Adrenal gland (tissue), 19 donors: ENCODE measurements at regions of chr1 and their contacts with region 1.

Region 1: GRCh38 chr1:39901698-39902459 is at the start of gene MYCL:
- DNase-seq: peak; percentile 32 to 71 (median 58)
- H3K4me3 ChIP-seq: peak within 1 kb of the TSS in 2 of 4 donors; percentile 24 to 57
- H3K27ac ChIP-seq: no peak within 1 kb of the TSS
- H3K4me1 ChIP-seq: peaks cover 11 to 19% of the 10 kb centered on the region in 2 donors
- H3K27me3 ChIP-seq: peaks cover 22% of the 10 kb centered on the region
- CTCF ChIP-seq: peak; percentile 38 to 64 (median 60)
- POLR2A ChIP-seq: no peak
- total RNA-seq, gene MYCL: 0.24 to 0.69 (median 0.37) TPM in 8 of 9 donors, not detected in the other

Region 2: DNA sequence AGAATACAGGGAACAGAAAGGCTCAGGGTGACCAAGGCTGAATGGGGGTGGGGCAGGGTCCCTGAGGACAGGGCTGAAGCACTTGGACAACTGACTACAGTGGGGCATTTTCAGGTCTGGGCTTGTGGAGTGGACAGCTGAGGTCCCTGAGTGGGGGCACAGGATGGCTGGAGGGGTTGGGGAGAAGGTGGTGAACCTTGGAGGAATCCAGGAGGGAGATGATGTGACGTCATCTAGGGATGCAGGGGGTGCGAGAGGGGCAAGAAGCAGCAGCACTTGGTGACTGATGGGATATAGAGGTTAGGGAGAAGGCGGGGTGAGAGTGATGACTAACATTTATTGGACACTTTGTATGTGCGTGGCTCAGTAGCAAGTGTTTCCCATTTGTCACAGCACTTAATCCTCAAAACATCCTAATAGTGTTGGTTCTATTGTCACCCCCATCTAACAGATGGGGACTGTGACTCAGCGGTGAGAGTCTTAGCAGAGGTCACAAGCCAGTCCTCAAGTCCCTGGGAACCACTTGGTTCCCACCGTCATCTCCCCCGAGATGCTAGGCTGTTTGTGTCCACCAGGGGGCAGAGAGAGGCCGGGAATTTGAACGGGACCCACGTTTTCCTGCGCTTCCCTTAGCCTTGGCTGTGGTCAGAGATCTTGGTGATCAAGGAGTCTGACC is 85.3 kb before region 1 on chr1:
- intact Hi-C with region 1: loop called (anchors 5 kb)
- DNase-seq: peak; percentile 35 to 88 (median 76)
- H3K4me3 ChIP-seq: no peak overlapping the region
- H3K27ac ChIP-seq: no peak overlapping the region
- H3K4me1 ChIP-seq: no peaks in the 10 kb centered on the region
- H3K27me3 ChIP-seq: no peaks in the 10 kb centered on the region
- CTCF ChIP-seq: peak; percentile 73 to 96 (median 92)
- POLR2A ChIP-seq: no peak